ENCODE measurements at regions of chr4 and their contacts with region 1.

Region 1: DNA sequence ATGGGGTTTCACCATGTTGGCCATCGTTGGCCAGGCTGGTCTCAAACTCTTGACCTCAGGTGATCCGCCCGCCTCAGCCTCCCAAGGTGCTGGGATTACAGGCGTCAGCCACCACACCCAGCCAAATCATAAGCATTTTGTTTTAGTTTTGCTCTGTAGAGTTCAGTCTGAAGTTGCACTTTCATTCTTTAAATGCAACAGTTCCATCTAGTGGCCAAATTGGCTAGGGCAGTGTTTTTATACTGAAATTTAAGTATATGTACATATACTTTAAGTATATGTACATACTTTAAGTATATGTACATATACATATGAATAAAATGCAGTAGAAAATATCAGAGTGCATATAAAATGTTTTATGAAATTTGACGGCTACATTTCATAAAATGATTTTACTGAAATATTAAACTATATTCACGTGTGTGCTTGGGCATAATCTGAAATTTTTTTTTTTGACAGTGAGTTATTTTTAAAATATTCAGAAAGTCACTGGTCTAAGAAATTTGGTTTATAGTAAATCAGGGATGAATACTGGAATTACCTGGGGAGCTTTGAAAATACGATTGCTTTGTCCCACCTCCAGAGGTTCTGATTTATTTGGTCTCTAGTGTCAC is 145.5 kb downstream of the NWD2 start:
- DNase-seq: peak; percentile 57
- H3K4me3 ChIP-seq: no peak overlapping the region
- H3K27ac ChIP-seq: no peak overlapping the region
- H3K4me1 ChIP-seq: no peaks in the 10 kb centered on the region
- CTCF ChIP-seq: peak; percentile 82

Region 2: GRCh38 chr4:36351082-36351666 is 1038.9 kb before region 1 on chr4:
- CTCF ChIA-PET with region 1: interaction called, 3 read pairs
- POLR2A ChIA-PET with region 1: no interaction called
- intact Hi-C with region 1: loop called (anchors 10 kb)
- DNase-seq: peak; percentile 58
- H3K4me3 ChIP-seq: no peak overlapping the region
- H3K27ac ChIP-seq: no peak overlapping the region
- H3K4me1 ChIP-seq: no peaks in the 10 kb centered on the region
- CTCF ChIP-seq: peak; percentile 88

Region 3: GRCh38 chr4:36414248-36414647 is 975.8 kb before region 1 on chr4:
- CTCF ChIA-PET with region 1: no interaction called
- POLR2A ChIA-PET with region 1: no interaction called
- intact Hi-C with region 1: loop called (anchors 10 kb)
- DNase-seq: peak; percentile 9
- H3K4me3 ChIP-seq: no peak overlapping the region
- H3K27ac ChIP-seq: no peak overlapping the region
- H3K4me1 ChIP-seq: no peaks in the 10 kb centered on the region
- CTCF ChIP-seq: peak; percentile 69

Region 4: DNA sequence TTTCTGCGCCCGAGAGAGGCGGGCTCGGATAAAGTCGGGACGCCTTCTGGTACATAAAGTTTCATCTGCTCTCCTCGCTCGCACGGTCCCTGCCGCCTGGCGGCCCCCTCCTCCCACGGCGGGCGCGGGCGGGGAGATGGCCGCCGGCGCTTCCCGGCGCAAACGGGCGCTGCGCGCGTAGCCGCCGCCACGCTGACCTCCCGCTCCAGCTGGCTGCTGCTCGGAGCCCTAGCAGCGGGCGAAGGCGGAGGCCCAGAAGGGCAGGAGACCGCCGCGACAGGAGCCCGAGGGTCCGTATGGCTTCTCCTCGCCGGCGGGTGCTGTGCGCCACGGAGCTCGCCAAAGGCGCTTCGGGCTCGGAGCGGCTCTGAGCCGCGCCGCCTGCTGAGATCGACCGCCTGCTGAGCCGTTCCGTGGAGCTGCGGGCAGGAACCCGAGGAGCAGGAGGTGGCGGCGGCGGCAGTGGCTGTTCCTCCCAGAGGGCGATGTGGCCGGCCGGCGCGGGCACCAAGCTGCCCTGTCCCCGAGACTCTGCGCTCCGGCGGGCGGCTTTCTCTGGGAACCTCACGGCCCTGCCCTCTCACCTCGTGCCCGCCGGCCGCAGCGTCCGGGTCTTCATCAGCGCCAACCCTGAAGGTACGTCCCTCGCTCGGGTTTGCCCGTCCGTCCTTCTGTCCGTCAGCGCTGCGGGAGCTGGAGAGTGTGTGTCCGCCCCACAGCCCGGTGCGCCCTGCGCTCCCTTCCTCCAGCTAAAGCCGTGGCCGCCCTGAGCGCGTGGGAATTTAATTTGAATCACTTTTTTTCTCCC is 145.3 kb before region 1 on chr4 and contains the start of gene NWD2:
- CTCF ChIA-PET with region 1: no interaction called
- POLR2A ChIA-PET with region 1: no interaction called
- intact Hi-C with region 1: no loop called
- DNase-seq: no peak
- H3K4me3 ChIP-seq: no peak within 1 kb of the TSS
- H3K27ac ChIP-seq: no peak within 1 kb of the TSS
- H3K4me1 ChIP-seq: no peaks in the 10 kb centered on the region
- CTCF ChIP-seq: no peak
- total RNA-seq, gene NWD2: not detected in 2 replicates

Region 5: DNA sequence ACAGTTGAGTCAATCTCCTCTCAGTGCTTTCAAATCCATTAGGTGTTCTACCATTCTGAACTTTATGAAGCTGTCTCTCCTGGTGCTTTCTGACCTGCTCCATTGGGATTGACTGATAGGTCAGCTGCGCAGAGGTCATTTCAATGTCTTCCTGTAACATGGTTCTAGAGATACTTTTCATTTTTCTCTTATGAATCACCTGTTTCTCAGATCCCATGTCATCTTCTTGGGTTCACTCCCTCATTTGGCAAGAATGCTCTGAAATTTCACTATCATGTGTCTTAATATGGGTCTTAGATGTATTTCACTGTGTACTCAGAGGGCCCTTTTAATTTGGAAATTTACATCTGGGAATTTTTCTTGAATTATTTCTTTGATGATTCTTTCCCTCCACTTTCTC is 422.6 kb after region 1 on chr4:
- CTCF ChIA-PET with region 1: no interaction called
- POLR2A ChIA-PET with region 1: no interaction called
- intact Hi-C with region 1: no loop called
- DNase-seq: no peak
- H3K4me3 ChIP-seq: no peak overlapping the region
- H3K27ac ChIP-seq: no peak overlapping the region
- H3K4me1 ChIP-seq: peaks cover 6% of the 10 kb centered on the region
- CTCF ChIP-seq: no peak